Panc1 (cell line): ENCODE measurements at regions of chr5 and their contacts with region 1.

Region 1: GRCh38 chr5:140357726-140358093 is 2.3 kb upstream of the SLC4A9 start:
- DNase-seq: peak; percentile 74
- ATAC-seq: peak; percentile 94
- H3K4me3 ChIP-seq: peak overlapping the region; percentile 7 to 52; a peak in 3 of 4 replicates
- H3K27ac ChIP-seq: no peak overlapping the region
- H3K4me1 ChIP-seq: no peaks in the 10 kb centered on the region
- H3K27me3 ChIP-seq: no peaks in the 10 kb centered on the region
- CTCF ChIP-seq: peak; percentile 96

Region 2: GRCh38 chr5:140214831-140215230 is 142.9 kb before region 1 on chr5:
- CTCF ChIA-PET with region 1: no interaction called
- POLR2A ChIA-PET with region 1: interaction called, 10 read pairs
- in situ Hi-C with region 1: no loop called
- intact Hi-C with region 1: no loop called
- DNase-seq: no peak
- ATAC-seq: no peak
- H3K4me3 ChIP-seq: no peak overlapping the region
- H3K27ac ChIP-seq: no peak overlapping the region
- H3K4me1 ChIP-seq: peaks cover 7% of the 10 kb centered on the region; the same call in 1 of the 2 replicates
- H3K27me3 ChIP-seq: no peaks in the 10 kb centered on the region
- CTCF ChIP-seq: no peak

Region 3: DNA sequence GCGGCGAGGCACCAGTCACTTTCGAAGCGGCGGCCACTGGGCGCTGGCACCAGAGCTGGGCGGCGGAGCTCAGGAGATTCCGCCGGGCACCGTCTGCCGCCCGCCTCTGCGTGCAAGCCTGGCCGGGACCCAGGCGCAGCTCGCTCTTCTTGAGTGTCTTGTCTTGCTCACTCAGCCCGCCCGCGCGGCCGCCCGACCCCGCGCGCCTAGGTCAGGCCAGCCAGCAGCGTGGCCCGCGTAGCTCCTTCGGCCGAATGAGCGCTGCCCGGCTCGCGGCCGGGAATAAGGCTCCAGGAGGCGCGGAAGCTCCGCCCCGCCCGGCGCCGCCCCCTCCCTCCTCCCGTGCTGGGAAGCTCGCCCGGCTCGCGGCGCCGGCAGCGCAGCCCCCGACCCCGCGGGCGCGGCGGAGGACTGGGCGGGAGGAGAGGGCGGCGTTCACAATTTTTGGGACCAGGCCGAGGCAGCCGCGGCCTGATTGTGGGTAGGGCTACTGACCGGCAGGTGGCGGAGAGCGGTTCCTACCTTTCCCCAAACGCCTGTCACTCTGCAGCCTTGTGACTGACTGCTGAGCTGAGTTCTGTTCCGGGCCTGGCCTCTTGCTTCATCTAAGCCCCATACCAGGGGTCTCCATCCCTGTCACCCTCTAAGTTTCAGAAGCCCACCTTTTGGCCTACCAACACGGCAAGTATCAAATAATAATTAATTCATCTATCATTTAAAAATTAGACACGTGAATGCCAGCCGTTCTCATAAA is 11.2 kb before region 1 on chr5 and contains the start of gene HBEGF:
- CTCF ChIA-PET with region 1: interaction called, 10 read pairs
- POLR2A ChIA-PET with region 1: interaction called, 13 read pairs
- in situ Hi-C with region 1: no loop called
- intact Hi-C with region 1: no loop called
- DNase-seq: peak; percentile 46
- ATAC-seq: peak; percentile 93
- H3K4me3 ChIP-seq: peak within 1 kb of the TSS; percentile 63 to 68
- H3K27ac ChIP-seq: peak within 1 kb of the TSS; percentile 63; the same call in 1 of the 2 replicates
- H3K4me1 ChIP-seq: peaks cover 14% of the 10 kb centered on the region
- H3K27me3 ChIP-seq: no peaks in the 10 kb centered on the region
- CTCF ChIP-seq: peak; percentile 59
- total RNA-seq, gene HBEGF: 5.0 TPM

Region 4: GRCh38 chr5:140408750-140409256 is 51.1 kb after region 1 on chr5:
- CTCF ChIA-PET with region 1: no interaction called
- POLR2A ChIA-PET with region 1: no interaction called
- in situ Hi-C with region 1: no loop called
- intact Hi-C with region 1: no loop called
- DNase-seq: no peak
- ATAC-seq: peak; percentile 86
- H3K4me3 ChIP-seq: no peak overlapping the region
- H3K27ac ChIP-seq: no peak overlapping the region
- H3K4me1 ChIP-seq: peaks cover 24% of the 10 kb centered on the region
- H3K27me3 ChIP-seq: no peaks in the 10 kb centered on the region
- CTCF ChIP-seq: no peak